ENCODE measurements at regions of chr14 and their contacts with region 1.

Region 1: GRCh38 chr14:91177073-91178034 is 63.5 kb downstream of the DGLUCY start:
- DNase-seq: peak; percentile 46 to 76 (median 69)
- H3K4me3 ChIP-seq: no peak overlapping the region
- H3K4me3 Mint-ChIP-seq: peak overlapping the region in 1 of 7 donors; percentile 34
- H3K27ac ChIP-seq: no peak overlapping the region
- H3K27ac Mint-ChIP-seq: peak overlapping the region; percentile 70 to 95 (median 80)
- H3K4me1 ChIP-seq: peaks cover 10% of the 10 kb centered on the region
- H3K4me1 Mint-ChIP-seq: peaks cover 11 to 18% (median 16%) of the 10 kb centered on the region in 3 donors
- H3K27me3 ChIP-seq: no peaks in the 10 kb centered on the region
- H3K27me3 Mint-ChIP-seq: peaks cover 0 to 1% of the 10 kb centered on the region in 2 donors

Region 2: DNA sequence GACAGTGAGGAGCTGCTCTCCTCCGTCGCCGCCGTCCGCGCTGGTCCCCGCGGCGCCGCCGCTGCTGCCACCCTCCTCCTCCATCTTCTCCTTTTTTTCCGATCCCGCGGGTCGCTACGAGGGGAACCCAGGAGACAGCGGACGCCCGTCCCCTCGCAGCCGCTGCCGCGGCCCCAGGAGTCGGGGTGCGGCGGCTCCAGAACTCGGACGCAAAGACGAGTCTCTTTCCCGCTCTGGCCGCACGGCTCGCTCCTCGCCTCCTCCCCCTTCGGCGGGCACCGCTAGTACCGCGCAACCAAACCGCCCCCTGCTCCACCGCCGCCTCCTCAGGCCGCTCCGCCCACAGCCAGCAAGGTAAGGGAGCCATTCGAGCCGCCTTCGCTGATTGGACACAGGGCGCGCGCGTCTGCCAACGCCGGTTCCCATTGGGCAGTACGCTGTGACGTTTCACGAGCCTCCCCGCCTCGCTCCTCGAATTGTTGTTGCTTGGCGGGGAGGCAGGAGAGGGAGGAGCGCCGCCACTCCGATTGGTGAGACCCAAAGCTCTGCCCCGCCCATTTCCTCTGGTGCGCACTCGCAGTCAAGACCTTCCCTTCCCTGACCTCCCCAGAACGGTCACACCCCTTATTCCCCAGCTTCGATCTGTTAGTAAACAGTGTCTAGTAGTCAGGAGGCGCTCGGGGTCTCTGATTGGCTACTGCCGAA is 116.9 kb before region 1 on chr14 and contains the start of gene RPS6KA5:
- CTCF ChIA-PET with region 1: interaction called, 22 read pairs
- POLR2A ChIA-PET with region 1: interaction called, 7 read pairs
- DNase-seq: peak; percentile 99 to 100 (median 100)
- H3K4me3 ChIP-seq: peak within 1 kb of the TSS; percentile 79
- H3K4me3 Mint-ChIP-seq: peak within 1 kb of the TSS; percentile 78 to 93 (median 85)
- H3K27ac ChIP-seq: peak within 1 kb of the TSS; percentile 94
- H3K27ac Mint-ChIP-seq: peak within 1 kb of the TSS in 6 of 8 donors; percentile 47 to 89 (median 60)
- H3K4me1 ChIP-seq: peaks cover 49% of the 10 kb centered on the region
- H3K4me1 Mint-ChIP-seq: peaks cover 57 to 66% (median 65%) of the 10 kb centered on the region in 3 donors
- H3K27me3 ChIP-seq: no peaks in the 10 kb centered on the region
- H3K27me3 Mint-ChIP-seq: no peaks in the 10 kb centered on the region
- total RNA-seq, gene RPS6KA5: 17.7 to 19.9 TPM

Region 3: GRCh38 chr14:91193069-91193468 is 15.7 kb after region 1 on chr14:
- CTCF ChIA-PET with region 1: interaction called, 19 read pairs
- POLR2A ChIA-PET with region 1: interaction called, 4 read pairs
- DNase-seq: no peak
- H3K4me3 ChIP-seq: no peak overlapping the region
- H3K4me3 Mint-ChIP-seq: no peak overlapping the region
- H3K27ac ChIP-seq: no peak overlapping the region
- H3K27ac Mint-ChIP-seq: peak overlapping the region in 3 of 8 donors; percentile 3 to 13 (median 4)
- H3K4me1 ChIP-seq: peaks cover 14% of the 10 kb centered on the region
- H3K4me1 Mint-ChIP-seq: peaks cover 20 to 27% (median 23%) of the 10 kb centered on the region in 3 donors
- H3K27me3 ChIP-seq: no peaks in the 10 kb centered on the region
- H3K27me3 Mint-ChIP-seq: no peaks in the 10 kb centered on the region

Region 4: GRCh38 chr14:91244501-91244901 is 67.1 kb after region 1 on chr14 and contains the start of gene GPR68:
- CTCF ChIA-PET with region 1: interaction called, 43 read pairs
- POLR2A ChIA-PET with region 1: interaction called, 3 read pairs
- DNase-seq: peak in 2 of 5 donors; percentile 29 to 62
- H3K4me3 ChIP-seq: peak within 1 kb of the TSS; percentile 82
- H3K4me3 Mint-ChIP-seq: peak within 1 kb of the TSS; percentile 87 to 95 (median 92)
- H3K27ac ChIP-seq: peak within 1 kb of the TSS; percentile 94
- H3K27ac Mint-ChIP-seq: peak within 1 kb of the TSS; percentile 85 to 100 (median 94)
- H3K4me1 ChIP-seq: peaks cover 80% of the 10 kb centered on the region
- H3K4me1 Mint-ChIP-seq: peaks cover 84 to 97% (median 95%) of the 10 kb centered on the region in 3 donors
- H3K27me3 ChIP-seq: no peaks in the 10 kb centered on the region
- H3K27me3 Mint-ChIP-seq: peaks cover 0 to 5% of the 10 kb centered on the region in 2 donors
- total RNA-seq, gene GPR68: 14.2 to 15.4 TPM

Region 5: GRCh38 chr14:91264151-91265150 is 87.1 kb after region 1 on chr14:
- CTCF ChIA-PET with region 1: interaction called, 16 read pairs
- POLR2A ChIA-PET with region 1: interaction called, 3 read pairs
- DNase-seq: peak in 3 of 5 donors; percentile 22 to 52 (median 25)
- H3K4me3 ChIP-seq: peak overlapping the region; percentile 32
- H3K4me3 Mint-ChIP-seq: peak overlapping the region; percentile 26 to 91 (median 76)
- H3K27ac ChIP-seq: peak overlapping the region; percentile 64
- H3K27ac Mint-ChIP-seq: peak overlapping the region in 7 of 8 donors; percentile 45 to 88 (median 74)
- H3K4me1 ChIP-seq: peaks cover 29% of the 10 kb centered on the region
- H3K4me1 Mint-ChIP-seq: peaks cover 48 to 76% (median 64%) of the 10 kb centered on the region in 3 donors
- H3K27me3 ChIP-seq: no peaks in the 10 kb centered on the region
- H3K27me3 Mint-ChIP-seq: peaks cover 0 to 8% of the 10 kb centered on the region in 2 donors

Region 6: GRCh38 chr14:91281346-91281745 is 104.0 kb after region 1 on chr14:
- CTCF ChIA-PET with region 1: interaction called, 199 read pairs
- POLR2A ChIA-PET with region 1: interaction called, 5 read pairs
- DNase-seq: no peak
- H3K4me3 ChIP-seq: no peak overlapping the region
- H3K4me3 Mint-ChIP-seq: no peak overlapping the region
- H3K27ac ChIP-seq: no peak overlapping the region
- H3K27ac Mint-ChIP-seq: peak overlapping the region in 4 of 8 donors; percentile 6 to 76 (median 66)
- H3K4me1 ChIP-seq: no peaks in the 10 kb centered on the region
- H3K4me1 Mint-ChIP-seq: peaks cover 2 to 9% (median 5%) of the 10 kb centered on the region in 3 donors
- H3K27me3 ChIP-seq: no peaks in the 10 kb centered on the region
- H3K27me3 Mint-ChIP-seq: peaks cover 0 to 2% of the 10 kb centered on the region in 2 donors